ENCODE measurements at regions of chr2 and their contacts with region 1.

Region 1: GRCh38 chr2:25197336-25198208 is 29.2 kb upstream of the POMC start:
- DNase-seq: no peak
- H3K4me3 ChIP-seq: no peak overlapping the region
- H3K27ac ChIP-seq: no peak overlapping the region
- H3K4me1 ChIP-seq: peaks cover 0 to 8% of the 10 kb centered on the region in 2 experiments; a peak in 1 of 4 replicates
- H3K27me3 ChIP-seq: no peaks in the 10 kb centered on the region
- CTCF ChIP-seq: no peak
- EP300 ChIP-seq: no peak
- RAD21 ChIP-seq: no peak

Region 2: DNA sequence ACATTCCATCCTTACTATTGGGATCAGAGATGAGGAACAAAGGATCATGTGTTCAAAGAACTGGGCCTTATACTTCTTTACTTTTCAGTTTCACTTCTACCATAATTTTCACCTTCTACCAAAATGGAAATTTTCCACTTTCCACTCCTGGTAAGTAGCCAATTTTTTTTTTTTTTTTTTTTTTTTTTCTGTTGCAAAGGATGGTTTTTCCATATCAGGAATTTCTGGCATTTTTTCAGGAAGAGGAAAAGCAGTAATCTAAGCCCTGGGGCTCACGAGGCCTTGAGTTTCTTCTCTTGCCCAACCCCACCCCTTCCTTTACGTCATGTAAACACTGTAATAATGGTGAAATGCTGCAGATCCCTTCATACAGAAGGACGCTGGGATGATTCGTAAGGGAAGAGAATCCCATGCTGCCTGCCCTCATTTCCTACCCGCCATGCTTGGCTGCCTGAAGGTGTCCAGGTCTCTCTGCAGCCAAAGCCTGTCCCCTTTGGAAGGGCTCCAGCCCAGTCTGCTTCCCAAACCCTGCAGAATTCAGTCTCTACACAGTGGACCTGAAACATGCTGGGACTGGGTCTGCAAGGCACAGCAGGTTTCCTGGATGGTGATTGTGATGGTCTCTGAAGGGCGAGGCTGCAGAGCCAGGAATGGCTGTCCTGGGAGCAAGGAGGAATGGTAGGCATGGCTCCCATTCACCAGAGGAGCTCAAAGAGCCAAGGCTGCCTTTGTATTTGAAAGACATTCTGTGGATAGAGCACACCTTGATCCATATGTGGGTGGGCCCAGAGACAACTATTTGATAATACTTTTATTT is 98.7 kb before region 1 on chr2:
- CTCF ChIA-PET with region 1: no interaction called
- POLR2A ChIA-PET with region 1: no interaction called
- DNase-seq: no peak
- H3K4me3 ChIP-seq: no peak overlapping the region
- H3K27ac ChIP-seq: no peak overlapping the region
- H3K4me1 ChIP-seq: peaks cover 6 to 8% of the 10 kb centered on the region in 2 experiments; a peak in 3 of 4 replicates
- H3K27me3 ChIP-seq: no peaks in the 10 kb centered on the region
- CTCF ChIP-seq: no peak
- EP300 ChIP-seq: no peak
- RAD21 ChIP-seq: no peak

Region 3: GRCh38 chr2:25145803-25146202 is 51.8 kb before region 1 on chr2:
- CTCF ChIA-PET with region 1: interaction called, 31 read pairs
- POLR2A ChIA-PET with region 1: no interaction called
- DNase-seq: no peak
- H3K4me3 ChIP-seq: no peak overlapping the region
- H3K27ac ChIP-seq: no peak overlapping the region
- H3K4me1 ChIP-seq: no peaks in the 10 kb centered on the region
- H3K27me3 ChIP-seq: no peaks in the 10 kb centered on the region
- CTCF ChIP-seq: no peak
- EP300 ChIP-seq: no peak
- RAD21 ChIP-seq: no peak

Region 4: GRCh38 chr2:25165992-25166875 is 31.3 kb before region 1 on chr2:
- CTCF ChIA-PET with region 1: interaction called, 121 read pairs
- POLR2A ChIA-PET with region 1: no interaction called
- DNase-seq: peak; percentile 73
- H3K4me3 ChIP-seq: no peak overlapping the region
- H3K27ac ChIP-seq: no peak overlapping the region
- H3K4me1 ChIP-seq: peaks cover 0 to 8% of the 10 kb centered on the region in 2 experiments; a peak in 1 of 4 replicates
- H3K27me3 ChIP-seq: peaks cover 42% of the 10 kb centered on the region
- CTCF ChIP-seq: peak; percentile 41
- EP300 ChIP-seq: no peak
- RAD21 ChIP-seq: peak; percentile 79

Region 5: GRCh38 chr2:25184261-25184695 is 13.3 kb before region 1 on chr2:
- CTCF ChIA-PET with region 1: interaction called, 29 read pairs
- POLR2A ChIA-PET with region 1: no interaction called
- DNase-seq: no peak
- H3K4me3 ChIP-seq: no peak overlapping the region
- H3K27ac ChIP-seq: no peak overlapping the region
- H3K4me1 ChIP-seq: no peaks in the 10 kb centered on the region
- H3K27me3 ChIP-seq: peaks cover 8% of the 10 kb centered on the region; the same call in 1 of the 2 replicates
- CTCF ChIP-seq: no peak
- EP300 ChIP-seq: no peak
- RAD21 ChIP-seq: no peak

Region 6: GRCh38 chr2:25420820-25421237 is 223.3 kb after region 1 on chr2:
- CTCF ChIA-PET with region 1: no interaction called
- POLR2A ChIA-PET with region 1: no interaction called
- DNase-seq: no peak
- H3K4me3 ChIP-seq: no peak overlapping the region
- H3K27ac ChIP-seq: no peak overlapping the region
- H3K4me1 ChIP-seq: peaks cover 10 to 14% of the 10 kb centered on the region in 2 experiments; a peak in 3 of 4 replicates
- H3K27me3 ChIP-seq: no peaks in the 10 kb centered on the region
- CTCF ChIP-seq: no peak
- EP300 ChIP-seq: no peak
- RAD21 ChIP-seq: no peak